Activated CD8-positive, alpha-beta T cell treated with anti-CD3 and anti-CD28 coated beads for 36 hours (primary cell): ENCODE measurements at regions of chr2 and their contacts with region 1.

Region 1: GRCh38 chr2:44087036-44087713 is 81.5 kb upstream of the PPM1B start:
- DNase-seq: peak; percentile 88
- ATAC-seq: peak; percentile 90
- H3K4me3 Mint-ChIP-seq: peak overlapping the region; percentile 63
- H3K27ac Mint-ChIP-seq: peak overlapping the region; percentile 87
- H3K4me1 Mint-ChIP-seq: peaks cover 24% of the 10 kb centered on the region
- H3K27me3 Mint-ChIP-seq: no peaks in the 10 kb centered on the region
- CTCF ChIP-seq: peak; percentile 89

Region 2: GRCh38 chr2:43724728-43725526 is 362.2 kb before region 1 on chr2:
- CTCF ChIA-PET with region 1: no interaction called
- POLR2A ChIA-PET with region 1: no interaction called
- intact Hi-C with region 1: no loop called
- DNase-seq: no peak
- ATAC-seq: no peak
- H3K4me3 Mint-ChIP-seq: no peak overlapping the region
- H3K27ac Mint-ChIP-seq: no peak overlapping the region
- H3K4me1 Mint-ChIP-seq: no peaks in the 10 kb centered on the region
- H3K27me3 Mint-ChIP-seq: peaks cover 3% of the 10 kb centered on the region
- CTCF ChIP-seq: no peak

Region 3: DNA sequence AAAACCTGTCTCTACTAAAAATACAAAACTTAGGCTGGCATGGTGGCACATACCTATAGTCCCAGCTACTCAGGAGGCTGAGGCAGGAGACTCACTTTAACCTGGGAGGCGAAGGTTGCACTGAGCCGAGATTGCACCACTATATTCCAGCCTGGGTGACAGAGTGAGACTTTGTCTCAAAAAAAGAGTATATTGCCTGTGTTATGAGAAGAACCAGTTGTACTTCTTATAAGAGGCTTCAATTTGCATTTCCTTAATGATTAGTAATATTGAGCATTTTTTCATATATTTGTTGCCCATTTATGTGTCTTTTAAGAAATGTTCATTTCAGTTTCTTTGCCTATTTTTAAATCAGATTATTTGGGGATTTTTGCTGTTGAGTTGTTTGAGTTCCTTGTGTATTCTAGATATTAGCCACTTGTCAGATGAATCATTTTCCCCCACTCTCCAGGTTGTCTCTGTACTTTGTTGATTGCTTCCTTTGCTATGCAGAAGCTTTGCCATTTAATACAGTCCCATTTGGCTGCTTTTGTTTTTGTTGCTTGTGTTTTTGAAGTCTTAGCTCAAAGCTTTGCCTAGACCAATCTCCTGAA is 15.6 kb before region 1 on chr2:
- CTCF ChIA-PET with region 1: interaction called, 15 read pairs
- POLR2A ChIA-PET with region 1: no interaction called
- intact Hi-C with region 1: no loop called
- DNase-seq: no peak
- ATAC-seq: no peak
- H3K4me3 Mint-ChIP-seq: no peak overlapping the region
- H3K27ac Mint-ChIP-seq: no peak overlapping the region
- H3K4me1 Mint-ChIP-seq: no peaks in the 10 kb centered on the region
- H3K27me3 Mint-ChIP-seq: peaks cover 8% of the 10 kb centered on the region
- CTCF ChIP-seq: no peak

Region 4: GRCh38 chr2:44167940-44168680 is 80.9 kb after region 1 on chr2:
- CTCF ChIA-PET with region 1: interaction called, 3 read pairs
- POLR2A ChIA-PET with region 1: no interaction called
- intact Hi-C with region 1: loop called (anchors 10 kb)
- DNase-seq: peak; percentile 100
- ATAC-seq: peak; percentile 80
- H3K4me3 Mint-ChIP-seq: peak overlapping the region; percentile 89
- H3K27ac Mint-ChIP-seq: peak overlapping the region; percentile 99
- H3K4me1 Mint-ChIP-seq: peaks cover 27% of the 10 kb centered on the region
- H3K27me3 Mint-ChIP-seq: no peaks in the 10 kb centered on the region
- CTCF ChIP-seq: no peak

Region 5: GRCh38 chr2:44295607-44296359 is 208.6 kb after region 1 on chr2:
- CTCF ChIA-PET with region 1: interaction called, 18 read pairs
- POLR2A ChIA-PET with region 1: no interaction called
- intact Hi-C with region 1: no loop called
- DNase-seq: peak; percentile 36
- ATAC-seq: no peak
- H3K4me3 Mint-ChIP-seq: no peak overlapping the region
- H3K27ac Mint-ChIP-seq: no peak overlapping the region
- H3K4me1 Mint-ChIP-seq: peaks cover 8% of the 10 kb centered on the region
- H3K27me3 Mint-ChIP-seq: peaks cover 3% of the 10 kb centered on the region
- CTCF ChIP-seq: no peak

Region 6: DNA sequence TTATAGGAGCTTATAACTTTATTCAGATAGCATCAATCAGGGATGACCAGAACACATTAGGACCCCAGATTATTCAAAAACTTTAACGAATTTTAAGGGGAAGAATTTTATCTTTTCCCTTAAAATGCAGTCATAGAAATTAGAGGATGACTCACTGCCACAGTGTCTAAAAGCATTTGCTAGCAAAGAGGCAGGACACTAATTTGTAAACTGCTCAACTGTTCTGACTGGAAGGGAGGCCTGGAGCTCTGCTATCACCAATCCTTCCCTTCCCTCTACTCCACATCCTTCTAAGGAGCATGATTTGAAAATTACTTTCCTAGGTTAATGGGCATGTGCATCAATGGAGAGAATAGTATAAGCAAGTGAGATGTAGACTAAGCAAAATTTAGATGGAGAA is 233.7 kb after region 1 on chr2:
- CTCF ChIA-PET with region 1: no interaction called
- POLR2A ChIA-PET with region 1: no interaction called
- intact Hi-C with region 1: no loop called
- DNase-seq: no peak
- ATAC-seq: no peak
- H3K4me3 Mint-ChIP-seq: no peak overlapping the region
- H3K27ac Mint-ChIP-seq: no peak overlapping the region
- H3K4me1 Mint-ChIP-seq: no peaks in the 10 kb centered on the region
- H3K27me3 Mint-ChIP-seq: no peaks in the 10 kb centered on the region
- CTCF ChIP-seq: no peak

Region 7: DNA sequence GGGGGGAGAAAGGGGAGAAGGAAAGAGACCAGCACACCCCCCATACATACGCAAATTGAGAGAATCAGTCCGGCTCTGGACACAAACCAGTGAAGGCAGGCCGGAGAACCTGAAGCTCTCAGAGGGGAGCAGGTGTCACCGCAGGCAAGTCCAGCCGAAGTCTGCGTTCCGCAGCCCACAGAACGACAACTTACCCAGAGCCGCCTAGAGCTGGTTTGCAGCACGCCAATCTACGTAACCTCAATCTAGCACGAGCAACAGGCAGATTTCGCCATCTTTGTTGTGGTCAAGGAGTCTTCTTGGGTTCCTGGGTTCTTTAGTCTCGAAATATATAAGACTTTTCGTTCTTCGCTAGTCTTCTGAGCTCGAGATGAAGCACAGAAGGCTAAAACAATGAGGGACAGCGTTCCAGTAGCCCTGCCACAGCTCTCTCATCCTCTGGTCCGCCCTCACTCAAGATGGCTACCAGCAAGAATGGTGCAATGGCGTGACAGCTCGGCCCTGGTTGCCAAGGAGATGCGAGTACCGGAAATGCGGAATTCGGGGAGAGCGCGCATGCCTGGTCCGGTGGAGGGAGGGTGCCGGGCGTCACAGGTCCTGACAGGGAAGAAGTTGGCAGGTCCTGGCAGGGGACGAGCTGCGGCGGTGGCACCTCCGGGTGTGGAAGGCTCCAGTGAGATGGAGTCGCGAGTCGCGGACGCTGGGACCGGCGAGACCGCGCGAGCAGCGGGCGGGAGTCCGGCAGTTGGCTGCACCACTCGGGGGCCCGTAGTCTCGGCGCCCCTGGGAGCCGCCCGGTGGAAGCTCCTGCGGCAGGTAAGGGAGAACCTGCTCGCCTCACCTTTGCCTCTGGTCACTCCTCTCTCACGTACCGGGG is 274.4 kb after region 1 on chr2 and contains the starts of genes CAMKMT and PREPL:
- CTCF ChIA-PET with region 1: interaction called, 7 read pairs
- POLR2A ChIA-PET with region 1: no interaction called
- intact Hi-C with region 1: loop called (anchors 10 kb)
- DNase-seq: peak; percentile 98
- ATAC-seq: peak; percentile 92
- H3K4me3 Mint-ChIP-seq: peak within 1 kb of the TSS; percentile 89
- H3K27ac Mint-ChIP-seq: peak within 1 kb of the TSS; percentile 100
- H3K4me1 Mint-ChIP-seq: peaks cover 50% of the 10 kb centered on the region
- H3K27me3 Mint-ChIP-seq: no peaks in the 10 kb centered on the region
- CTCF ChIP-seq: no peak
- total RNA-seq, gene CAMKMT: 12.1 to 14.1 TPM
- total RNA-seq, gene PREPL: 25.0 to 25.2 TPM